ENCODE measurements at regions of chr12 and their contacts with region 1.

Region 1: GRCh38 chr12:120649442-120650232 is 9.2 kb downstream of the CABP1 start:
- DNase-seq: no peak
- H3K4me3 ChIP-seq: peak overlapping the region; percentile 5 to 60 (median 35)
- H3K27ac ChIP-seq: peak overlapping the region; percentile 32 to 82 (median 54)
- H3K4me1 ChIP-seq: peaks cover 6 to 40% (median 12%) of the 10 kb centered on the region in 3 donors
- H3K27me3 ChIP-seq: peaks cover 0 to 55% (median 3%) of the 10 kb centered on the region in 4 donors
- CTCF ChIP-seq: no peak
- POLR2A ChIP-seq: no peak

Region 2: DNA sequence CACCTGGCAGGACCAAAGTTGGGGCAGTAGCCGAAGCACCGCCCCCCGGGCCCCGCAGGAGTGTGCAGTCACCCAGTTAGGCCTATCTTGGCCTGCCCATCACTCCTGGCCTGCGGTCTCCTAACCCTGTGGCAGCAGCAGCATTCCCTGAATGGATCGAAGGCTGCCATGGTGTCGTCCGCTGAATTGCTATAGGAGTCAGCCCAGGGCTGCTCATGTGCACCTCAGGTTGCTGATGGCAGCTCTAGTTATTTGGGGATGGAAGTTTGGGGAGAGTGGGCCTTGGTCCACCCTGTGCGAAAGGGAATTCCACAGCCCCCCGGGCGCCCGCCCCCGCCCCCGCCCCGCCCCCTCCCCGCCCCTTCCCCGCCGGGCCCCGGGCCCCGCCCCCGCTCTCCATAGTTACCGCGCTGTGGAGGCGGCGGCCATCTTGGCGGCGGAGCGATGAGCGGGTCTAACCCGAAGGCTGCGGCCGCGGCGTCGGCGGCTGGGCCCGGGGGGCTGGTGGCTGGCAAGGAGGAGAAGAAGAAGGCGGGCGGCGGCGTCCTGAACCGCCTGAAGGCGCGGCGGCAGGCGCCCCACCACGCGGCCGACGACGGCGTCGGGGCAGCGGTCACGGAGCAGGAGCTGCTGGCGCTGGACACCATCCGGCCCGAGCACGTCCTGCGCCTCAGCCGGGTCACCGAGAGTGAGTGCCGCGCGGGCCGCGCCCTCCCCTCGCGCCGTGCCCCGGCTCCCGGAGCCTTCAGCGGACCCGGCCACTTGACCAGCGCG is 60.6 kb after region 1 on chr12 and contains the start of gene UNC119B:
- intact Hi-C with region 1: loop called (anchors 5 kb)
- DNase-seq: no peak
- H3K4me3 ChIP-seq: peak within 1 kb of the TSS; percentile 72 to 98 (median 88)
- H3K27ac ChIP-seq: peak within 1 kb of the TSS; percentile 86 to 93 (median 90)
- H3K4me1 ChIP-seq: peaks cover 14 to 36% (median 18%) of the 10 kb centered on the region in 3 donors
- H3K27me3 ChIP-seq: no peaks in the 10 kb centered on the region
- CTCF ChIP-seq: no peak
- POLR2A ChIP-seq: no peak
- total RNA-seq, gene UNC119B: 6.4 to 23.3 (median 12.4) TPM

Region 3: DNA sequence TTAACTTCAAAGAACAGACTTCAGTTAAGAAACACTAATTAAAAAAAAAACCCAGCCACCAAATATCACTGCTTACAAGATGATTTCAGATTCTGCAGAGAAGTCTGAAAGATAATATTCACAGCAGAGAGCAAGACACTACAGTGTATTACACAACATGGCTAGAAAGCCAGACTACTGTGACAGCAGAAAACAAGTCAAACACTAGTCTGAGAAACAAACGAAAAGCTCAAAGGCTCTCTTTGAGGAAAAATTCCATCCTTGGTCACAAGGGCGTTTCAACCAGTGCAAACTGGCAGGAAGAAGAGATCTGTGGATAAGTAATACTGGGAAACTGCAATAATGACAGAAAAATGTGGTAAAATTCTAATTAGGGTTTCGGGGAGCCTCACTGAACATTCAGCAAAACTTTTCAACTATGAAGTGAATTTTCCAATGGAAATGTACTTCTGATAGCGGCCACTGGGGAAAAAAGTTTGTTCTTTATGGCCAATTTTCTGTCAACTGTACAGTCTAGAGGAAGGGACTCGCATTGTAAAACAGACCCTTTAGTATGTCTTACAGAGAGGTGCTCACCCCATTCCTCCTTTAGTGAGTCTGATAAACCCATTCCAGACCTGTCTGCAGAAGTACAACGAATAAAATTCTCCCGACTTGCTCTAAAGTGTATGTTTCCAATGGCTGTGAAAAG is 126.4 kb after region 1 on chr12:
- intact Hi-C with region 1: no loop called
- DNase-seq: no peak
- H3K4me3 ChIP-seq: no peak overlapping the region
- H3K27ac ChIP-seq: no peak overlapping the region
- H3K4me1 ChIP-seq: no peaks in the 10 kb centered on the region
- H3K27me3 ChIP-seq: no peaks in the 10 kb centered on the region
- CTCF ChIP-seq: peak in 2 of 6 experiments; percentile 19 to 24
- POLR2A ChIP-seq: no peak

Region 4: DNA sequence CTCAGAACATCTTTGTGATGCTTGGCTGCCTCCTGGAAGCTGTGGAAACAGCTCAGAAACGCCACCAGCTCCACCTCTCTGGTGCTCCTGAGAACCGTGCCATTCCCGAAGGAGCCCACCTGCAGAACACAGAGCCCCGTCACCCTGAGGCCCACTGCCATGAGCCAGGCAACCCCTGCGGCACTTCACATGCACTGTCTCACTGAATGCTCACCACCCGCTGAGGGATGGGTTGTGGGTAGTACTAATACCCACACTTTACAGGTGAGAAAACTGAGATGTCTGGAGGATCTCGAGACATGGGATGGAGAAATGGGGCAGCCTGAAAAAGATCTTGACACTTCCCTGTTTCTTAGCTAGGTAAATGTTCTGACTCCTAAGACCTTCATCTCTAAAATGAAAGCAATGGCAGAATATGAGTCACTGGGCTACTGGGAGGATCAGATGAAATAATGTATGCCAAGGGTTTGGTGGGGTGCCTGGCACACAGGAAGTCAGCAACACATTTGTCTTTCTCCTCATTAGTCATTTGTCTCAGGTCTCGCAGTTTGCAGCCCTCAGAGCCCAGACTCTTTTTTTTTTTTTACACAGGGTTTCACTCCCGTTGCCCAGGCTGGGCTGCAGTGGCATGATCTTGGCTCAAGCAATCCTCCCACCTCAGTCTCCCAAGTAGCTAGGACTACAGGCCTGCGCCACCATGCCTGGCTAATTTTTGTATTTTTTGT is 384.1 kb after region 1 on chr12:
- intact Hi-C with region 1: no loop called
- DNase-seq: no peak
- H3K4me3 ChIP-seq: no peak overlapping the region
- H3K27ac ChIP-seq: peak overlapping the region; percentile 30 to 79 (median 61)
- H3K4me1 ChIP-seq: peaks cover 2 to 32% (median 6%) of the 10 kb centered on the region in 3 donors
- H3K27me3 ChIP-seq: no peaks in the 10 kb centered on the region
- CTCF ChIP-seq: no peak
- POLR2A ChIP-seq: no peak

Measured in esophagus squamous epithelium (tissue), 5 donors.